Endothelial cell of umbilical vein (primary cell): ENCODE measurements at regions of chr1 and their contacts with region 1.

Region 1: GRCh38 chr1:36187800-36188593 is 32.0 kb downstream of the MAP7D1 start:
- DNase-seq: peak; percentile 92
- H3K4me3 ChIP-seq: no peak overlapping the region
- H3K27ac ChIP-seq: peak overlapping the region; percentile 46
- H3K4me1 ChIP-seq: peaks cover 6% of the 10 kb centered on the region
- H3K27me3 ChIP-seq: no peaks in the 10 kb centered on the region
- CTCF ChIP-seq: peak; percentile 83 to 89
- POLR2A ChIP-seq: peak; percentile 65

Region 2: DNA sequence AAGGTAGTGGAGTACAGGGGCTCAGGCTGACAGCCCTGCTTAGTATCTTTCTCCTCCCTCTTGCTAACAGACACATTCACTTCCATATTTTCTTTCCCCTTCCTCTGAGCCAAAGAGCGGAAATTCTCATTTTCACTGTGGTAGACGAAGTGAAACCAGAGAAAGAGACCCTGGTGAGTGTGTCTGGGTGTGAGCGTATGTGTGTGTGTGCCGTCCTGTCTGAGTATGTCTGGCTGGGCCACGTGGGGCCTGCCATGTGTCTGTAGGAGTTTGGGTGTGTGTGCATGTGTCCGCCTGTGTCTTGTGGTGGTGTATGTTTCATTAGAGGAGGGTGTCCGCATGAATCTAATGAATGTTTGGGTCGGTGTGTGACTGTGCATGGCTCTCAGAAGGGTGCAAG is 64.6 kb before region 1 on chr1:
- CTCF ChIA-PET with region 1: no interaction called
- POLR2A ChIA-PET with region 1: no interaction called
- dilution Hi-C with region 1: no loop called
- intact Hi-C with region 1: no loop called
- DNase-seq: no peak
- H3K4me3 ChIP-seq: no peak overlapping the region
- H3K27ac ChIP-seq: no peak overlapping the region
- H3K4me1 ChIP-seq: no peaks in the 10 kb centered on the region
- H3K27me3 ChIP-seq: peaks cover 5 to 9% of the 10 kb centered on the region in 2 experiments
- CTCF ChIP-seq: no peak
- POLR2A ChIP-seq: no peak

Region 3: DNA sequence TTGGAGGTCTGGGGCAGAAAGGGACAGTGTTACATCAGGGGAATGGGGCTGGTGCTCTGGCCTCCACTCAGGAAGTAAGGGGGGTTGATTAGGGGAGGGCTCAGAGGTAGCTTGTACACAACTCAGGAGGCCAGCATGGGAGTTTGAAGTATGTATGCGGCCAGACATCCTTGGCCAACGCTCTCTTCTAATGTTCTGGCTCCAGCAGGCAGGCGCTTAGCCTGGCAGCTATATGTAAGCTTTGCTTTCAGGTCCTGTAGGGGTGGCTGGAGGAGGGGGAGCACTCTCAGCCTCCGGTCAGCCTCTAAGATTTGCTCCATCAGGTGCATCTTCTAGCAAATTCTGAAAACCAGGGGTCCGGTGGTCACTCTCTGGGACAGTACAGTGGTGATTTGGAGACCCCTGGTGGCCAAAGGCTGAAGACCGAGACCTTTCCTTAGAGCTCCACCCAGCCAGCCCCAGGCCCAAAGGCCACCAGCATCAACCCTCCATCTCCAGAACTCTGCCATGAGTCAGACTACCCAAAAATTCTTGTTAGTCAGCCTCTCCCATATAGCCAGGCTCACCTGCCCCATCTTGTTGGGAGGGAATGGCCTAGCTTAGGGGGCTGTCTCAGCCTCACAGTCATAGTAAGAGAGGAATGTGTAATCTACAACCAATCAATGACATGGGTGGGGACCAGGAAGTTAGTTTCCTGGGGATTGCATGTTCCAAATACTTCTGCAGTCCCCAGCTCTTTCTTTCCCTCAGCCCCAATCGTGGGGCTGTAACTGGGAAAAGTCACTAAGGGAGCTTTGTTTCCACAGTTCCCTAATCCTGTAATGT is 53.3 kb before region 1 on chr1:
- CTCF ChIA-PET with region 1: interaction called, 38 read pairs
- POLR2A ChIA-PET with region 1: no interaction called
- dilution Hi-C with region 1: no loop called
- intact Hi-C with region 1: loop called (anchors 1 kb)
- DNase-seq: peak; percentile 54
- H3K4me3 ChIP-seq: no peak overlapping the region
- H3K27ac ChIP-seq: peak overlapping the region; percentile 95
- H3K4me1 ChIP-seq: peaks cover 42% of the 10 kb centered on the region
- H3K27me3 ChIP-seq: no peaks in the 10 kb centered on the region
- CTCF ChIP-seq: peak; percentile 81 to 82
- POLR2A ChIP-seq: peak; percentile 64

Region 4: GRCh38 chr1:36160949-36161485 is 27.0 kb before region 1 on chr1:
- CTCF ChIA-PET with region 1: interaction called, 201 read pairs
- POLR2A ChIA-PET with region 1: interaction called, 13 read pairs
- dilution Hi-C with region 1: no loop called
- intact Hi-C with region 1: loop called (anchors 1 kb)
- DNase-seq: peak; percentile 83
- H3K4me3 ChIP-seq: peak overlapping the region; percentile 26 to 66 (median 36)
- H3K27ac ChIP-seq: peak overlapping the region; percentile 97
- H3K4me1 ChIP-seq: peaks cover 51% of the 10 kb centered on the region
- H3K27me3 ChIP-seq: no peaks in the 10 kb centered on the region
- CTCF ChIP-seq: peak; percentile 29 to 36
- POLR2A ChIP-seq: peak; percentile 86

Region 5: DNA sequence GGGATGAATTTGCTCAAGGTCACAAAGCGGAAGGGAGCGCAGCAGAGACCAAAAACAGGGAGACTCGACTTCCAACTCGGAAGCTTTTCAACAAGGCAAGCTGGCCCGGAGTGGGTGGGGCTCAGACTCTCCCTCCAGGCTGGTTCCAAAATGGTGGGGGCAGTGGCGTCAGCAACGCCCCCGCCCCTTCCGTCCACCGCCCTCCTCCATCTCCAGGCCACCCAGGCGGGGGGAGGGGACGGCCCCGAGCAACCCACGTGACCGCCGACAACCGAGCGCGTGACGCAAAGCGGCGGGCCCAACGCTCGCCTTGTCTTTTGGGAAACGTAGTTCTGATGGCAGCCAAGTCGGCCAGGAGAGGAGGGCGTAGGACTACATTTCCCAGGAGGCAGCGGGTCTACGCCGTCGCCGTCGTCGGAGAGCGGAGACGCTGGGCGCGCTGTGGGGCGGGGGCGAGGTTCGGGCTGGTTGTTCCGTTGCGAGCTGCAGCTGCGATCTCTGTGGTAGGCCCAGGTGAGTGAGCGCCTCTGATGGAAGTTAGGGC is 36.1 kb after region 1 on chr1 and contains the start of gene THRAP3:
- CTCF ChIA-PET with region 1: interaction called, 17 read pairs
- POLR2A ChIA-PET with region 1: interaction called, 3 read pairs
- dilution Hi-C with region 1: no loop called
- intact Hi-C with region 1: loop called (anchors 1 kb)
- DNase-seq: peak; percentile 100
- H3K4me3 ChIP-seq: peak within 1 kb of the TSS; percentile 74 to 99 (median 78)
- H3K27ac ChIP-seq: peak within 1 kb of the TSS; percentile 89
- H3K4me1 ChIP-seq: peaks cover 17% of the 10 kb centered on the region
- H3K27me3 ChIP-seq: no peaks in the 10 kb centered on the region
- CTCF ChIP-seq: no peak
- POLR2A ChIP-seq: peak; percentile 93
- total RNA-seq, gene THRAP3: 130 and 144 TPM in 2 replicates

Region 6: GRCh38 chr1:36285448-36286101 is 97.6 kb after region 1 on chr1:
- CTCF ChIA-PET with region 1: interaction called, 32 read pairs
- POLR2A ChIA-PET with region 1: no interaction called
- dilution Hi-C with region 1: no loop called
- intact Hi-C with region 1: loop called (anchors 1 kb)
- DNase-seq: peak; percentile 79
- H3K4me3 ChIP-seq: no peak overlapping the region
- H3K27ac ChIP-seq: no peak overlapping the region
- H3K4me1 ChIP-seq: no peaks in the 10 kb centered on the region
- H3K27me3 ChIP-seq: no peaks in the 10 kb centered on the region
- CTCF ChIP-seq: peak; percentile 57 to 59
- POLR2A ChIP-seq: no peak